CD4-positive, alpha-beta memory T cell (primary cell): ENCODE measurements at regions of chr3 and their contacts with region 1.

Region 1: GRCh38 chr3:51384726-51385473 is at the start of gene MANF:
- DNase-seq: peak; percentile 97 to 98 (median 98)
- H3K4me3 ChIP-seq: peak within 1 kb of the TSS; percentile 61 to 93
- H3K4me3 Mint-ChIP-seq: peak within 1 kb of the TSS; percentile 98 to 99 (median 99)
- H3K27ac ChIP-seq: peak within 1 kb of the TSS; percentile 92
- H3K27ac Mint-ChIP-seq: peak within 1 kb of the TSS; percentile 98 to 100 (median 99)
- H3K4me1 ChIP-seq: peaks cover 38% of the 10 kb centered on the region
- H3K4me1 Mint-ChIP-seq: peaks cover 25 to 62% (median 42%) of the 10 kb centered on the region in 4 donors
- H3K27me3 ChIP-seq: no peaks in the 10 kb centered on the region
- H3K27me3 Mint-ChIP-seq: no peaks in the 10 kb centered on the region
- total RNA-seq, gene MANF: 74.8 to 79.0 TPM

Region 2: DNA sequence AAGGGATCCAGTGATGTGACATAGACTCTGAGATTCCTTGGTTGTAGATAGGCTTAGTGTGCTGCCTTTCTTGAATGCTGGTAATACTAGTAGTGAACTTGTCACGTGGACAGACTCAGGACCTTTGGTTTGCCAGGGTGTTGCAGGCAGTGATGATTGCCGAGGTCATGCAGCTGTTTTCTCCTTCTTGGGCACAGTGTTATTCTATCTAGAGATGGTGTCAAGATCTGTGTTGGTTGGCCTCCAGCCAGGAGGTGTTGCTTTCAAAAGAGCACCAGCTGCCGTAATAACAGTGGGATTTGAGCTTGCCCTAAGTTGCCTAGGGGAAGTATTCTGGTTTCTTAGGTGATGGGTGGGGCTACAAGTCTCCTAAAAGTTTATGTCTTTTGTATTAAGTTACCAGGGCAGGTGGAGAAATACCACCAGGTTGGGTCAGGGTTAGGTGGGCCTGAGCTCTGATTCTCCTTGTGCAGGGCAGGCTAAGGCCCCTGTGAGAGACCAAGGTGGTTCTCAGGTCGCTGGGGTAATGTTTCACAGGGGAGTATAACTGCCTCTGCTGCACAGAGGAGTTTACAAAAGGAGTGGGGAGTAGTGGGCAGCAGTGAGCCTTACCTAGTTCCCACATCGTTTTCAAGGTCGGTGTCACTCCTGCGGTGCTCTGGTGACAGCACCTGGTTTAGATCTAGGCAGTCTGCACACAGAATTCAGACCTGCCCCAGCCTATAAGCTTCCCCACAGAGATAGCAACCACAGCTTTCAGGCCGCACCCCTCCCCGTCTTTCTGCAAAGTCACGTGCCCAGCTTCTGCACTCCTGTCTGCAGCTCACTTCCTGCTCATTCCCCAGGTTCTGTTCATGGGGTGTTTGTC is 359.9 kb before region 1 on chr3:
- CTCF ChIA-PET with region 1: interaction called, 18 read pairs
- POLR2A ChIA-PET with region 1: interaction called, 14 read pairs
- intact Hi-C with region 1: loop called (anchors 2 kb)
- DNase-seq: peak; percentile 82 to 93 (median 86)
- H3K4me3 ChIP-seq: peak overlapping the region; percentile 39 to 50
- H3K4me3 Mint-ChIP-seq: peak overlapping the region; percentile 68 to 91 (median 81)
- H3K27ac ChIP-seq: peak overlapping the region; percentile 60
- H3K27ac Mint-ChIP-seq: peak overlapping the region; percentile 92 to 98 (median 95)
- H3K4me1 ChIP-seq: peaks cover 45% of the 10 kb centered on the region
- H3K4me1 Mint-ChIP-seq: peaks cover 42 to 69% (median 50%) of the 10 kb centered on the region in 4 donors
- H3K27me3 ChIP-seq: no peaks in the 10 kb centered on the region
- H3K27me3 Mint-ChIP-seq: peaks cover 0 to 1% of the 10 kb centered on the region in 2 donors

Region 3: DNA sequence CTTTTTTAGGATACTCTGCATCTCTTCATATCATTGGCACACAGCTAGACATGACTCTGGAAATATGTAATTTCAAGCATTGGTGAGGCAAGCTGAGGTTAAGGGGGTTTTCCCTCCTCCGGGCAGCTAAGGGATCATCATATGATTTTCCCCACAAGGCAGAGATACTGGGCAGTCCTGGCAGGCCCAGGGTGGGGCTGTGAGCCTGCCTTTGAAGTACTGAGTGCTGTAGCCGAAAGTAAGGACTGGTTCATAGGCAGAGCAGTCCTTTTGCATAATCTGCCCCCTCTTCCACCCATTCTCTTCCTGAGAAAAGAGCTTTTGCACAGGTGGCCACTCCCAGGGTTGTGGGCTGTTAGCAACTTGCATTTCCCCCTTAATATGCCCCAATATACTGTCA is 168.6 kb before region 1 on chr3:
- CTCF ChIA-PET with region 1: no interaction called
- POLR2A ChIA-PET with region 1: no interaction called
- intact Hi-C with region 1: no loop called
- DNase-seq: no peak
- H3K4me3 ChIP-seq: no peak overlapping the region
- H3K4me3 Mint-ChIP-seq: no peak overlapping the region
- H3K27ac ChIP-seq: no peak overlapping the region
- H3K27ac Mint-ChIP-seq: no peak overlapping the region
- H3K4me1 ChIP-seq: no peaks in the 10 kb centered on the region
- H3K4me1 Mint-ChIP-seq: no peaks in the 10 kb centered on the region
- H3K27me3 ChIP-seq: no peaks in the 10 kb centered on the region
- H3K27me3 Mint-ChIP-seq: peaks cover 0 to 1% of the 10 kb centered on the region in 2 donors

Region 4: GRCh38 chr3:51538459-51539290 is 153.8 kb after region 1 on chr3 and contains the start of gene RAD54L2:
- CTCF ChIA-PET with region 1: no interaction called
- POLR2A ChIA-PET with region 1: interaction called, 14 read pairs
- intact Hi-C with region 1: no loop called
- DNase-seq: peak; percentile 62 to 74 (median 66)
- H3K4me3 ChIP-seq: peak within 1 kb of the TSS; percentile 76 to 80
- H3K4me3 Mint-ChIP-seq: peak within 1 kb of the TSS; percentile 85 to 98 (median 94)
- H3K27ac ChIP-seq: peak within 1 kb of the TSS; percentile 67
- H3K27ac Mint-ChIP-seq: peak within 1 kb of the TSS; percentile 91 to 97 (median 95)
- H3K4me1 ChIP-seq: peaks cover 27% of the 10 kb centered on the region
- H3K4me1 Mint-ChIP-seq: peaks cover 26 to 42% (median 33%) of the 10 kb centered on the region in 4 donors
- H3K27me3 ChIP-seq: no peaks in the 10 kb centered on the region
- H3K27me3 Mint-ChIP-seq: no peaks in the 10 kb centered on the region
- total RNA-seq, gene RAD54L2: 39.8 to 40.1 TPM